Activated CD8-positive, alpha-beta T cell treated with anti-CD3 and anti-CD28 coated beads, Interleukin-2, amount 10 ng/mL, durations not matched to agents 7 days and 5 days (primary cell): ENCODE measurements at regions of chr20 and their contacts with region 1.

Region 1: DNA sequence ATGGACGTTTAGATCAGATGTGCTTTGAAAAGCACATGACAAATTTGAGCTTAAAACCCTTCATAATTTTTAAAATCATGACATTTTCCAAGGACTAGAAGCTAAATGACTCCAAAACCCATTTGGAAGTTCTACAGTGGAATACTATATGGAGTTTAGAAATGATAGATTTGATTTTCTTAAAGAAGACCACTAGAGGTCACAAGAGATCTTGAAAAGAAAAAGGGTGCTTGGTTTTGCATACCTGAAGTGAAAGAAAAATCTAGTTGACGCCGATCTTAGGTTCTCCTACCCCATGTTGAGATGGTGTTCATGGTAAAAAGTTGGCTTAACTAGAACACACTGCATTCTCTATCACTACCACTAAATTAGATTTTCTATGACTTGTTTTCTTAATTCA is 31.5 kb downstream of the CFAP61 start:
- DNase-seq: no peak
- ATAC-seq: peak; percentile 63
- H3K4me3 Mint-ChIP-seq: peak overlapping the region; percentile 51
- H3K27ac Mint-ChIP-seq: no peak overlapping the region
- H3K4me1 Mint-ChIP-seq: peaks cover 2% of the 10 kb centered on the region
- H3K27me3 Mint-ChIP-seq: peaks cover 12% of the 10 kb centered on the region

Region 2: DNA sequence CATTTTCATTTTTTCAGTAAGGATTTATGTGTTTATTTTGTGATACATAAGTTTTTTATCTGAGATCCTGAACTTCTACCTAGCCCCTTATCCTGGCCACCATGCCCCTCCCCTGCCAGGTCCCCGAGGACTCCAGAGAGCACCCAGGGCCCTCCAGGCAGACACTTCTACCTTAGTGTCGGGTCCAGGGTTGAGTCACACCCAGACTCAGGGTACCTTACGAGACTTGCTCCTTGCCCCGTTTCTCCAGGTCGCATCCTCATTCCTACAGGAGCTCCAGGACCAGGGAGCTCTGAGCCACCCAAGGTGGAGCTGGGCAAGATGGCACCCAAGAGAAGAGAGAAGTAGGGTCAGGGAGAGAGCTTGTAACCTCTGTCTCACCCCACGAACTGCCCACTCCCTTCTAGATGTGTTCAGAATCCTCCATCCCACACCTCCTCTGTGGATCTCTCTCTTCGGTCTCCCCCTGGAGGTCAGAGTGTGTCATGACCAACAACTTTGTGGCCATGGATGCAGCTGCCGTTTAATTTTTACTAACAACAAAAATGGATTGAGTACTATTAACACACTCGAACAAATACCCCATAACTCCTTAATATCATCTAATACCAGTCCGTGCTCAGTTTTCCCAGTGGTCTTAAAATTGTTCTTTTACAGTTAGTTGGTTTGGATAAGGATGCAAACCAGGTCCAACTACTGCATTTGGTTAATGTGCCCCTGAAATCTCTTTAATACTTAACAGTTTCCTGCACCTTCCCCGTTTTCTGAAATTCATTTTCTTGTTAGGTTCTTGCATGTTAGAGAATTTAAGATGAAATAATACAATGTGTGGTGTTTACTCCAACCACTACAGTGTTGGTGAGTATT is 153.5 kb after region 1 on chr20:
- CTCF ChIA-PET with region 1: interaction called, 12 read pairs
- POLR2A ChIA-PET with region 1: no interaction called
- DNase-seq: peak; percentile 48
- ATAC-seq: peak; percentile 39
- H3K4me3 Mint-ChIP-seq: no peak overlapping the region
- H3K27ac Mint-ChIP-seq: no peak overlapping the region
- H3K4me1 Mint-ChIP-seq: no peaks in the 10 kb centered on the region
- H3K27me3 Mint-ChIP-seq: peaks cover 2% of the 10 kb centered on the region

Region 3: DNA sequence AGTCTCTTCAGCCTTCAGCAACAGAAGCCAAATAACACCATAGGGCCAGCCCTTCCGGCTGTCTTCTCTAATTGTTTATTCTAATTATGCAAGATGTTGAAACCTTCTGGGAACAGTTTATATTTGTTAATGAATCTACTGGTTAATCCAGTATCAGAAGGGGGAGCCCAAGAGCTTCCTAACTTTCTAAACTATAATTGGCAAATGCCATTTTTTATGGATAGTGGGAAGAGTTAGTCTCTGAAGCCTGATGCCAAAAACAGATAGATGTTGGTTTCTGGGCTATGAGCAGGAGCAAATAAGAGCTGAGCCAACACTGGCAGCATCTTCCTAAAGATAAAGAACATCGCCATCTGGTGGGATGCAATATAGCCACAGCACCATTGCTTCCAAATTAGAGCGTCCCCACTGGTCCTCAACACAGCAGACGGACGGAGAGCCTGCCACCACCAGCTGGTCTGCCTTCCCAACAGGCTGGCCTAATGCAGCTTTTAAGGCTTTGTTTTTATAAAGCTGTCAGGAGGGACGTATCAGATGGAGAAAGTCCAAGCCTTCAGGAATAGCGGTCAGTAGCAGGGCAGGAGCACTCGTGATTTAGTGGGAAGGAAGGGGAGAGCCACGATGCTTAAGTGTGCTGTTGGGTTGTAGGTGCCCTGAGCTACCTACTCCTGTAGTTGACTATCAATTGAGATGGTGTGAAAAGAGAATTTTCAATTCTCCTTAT is 509.8 kb after region 1 on chr20:
- CTCF ChIA-PET with region 1: interaction called, 15 read pairs
- POLR2A ChIA-PET with region 1: no interaction called
- DNase-seq: peak; percentile 26
- ATAC-seq: no peak
- H3K4me3 Mint-ChIP-seq: no peak overlapping the region
- H3K27ac Mint-ChIP-seq: no peak overlapping the region
- H3K4me1 Mint-ChIP-seq: no peaks in the 10 kb centered on the region
- H3K27me3 Mint-ChIP-seq: no peaks in the 10 kb centered on the region